ENCODE measurements at regions of chr17 and their contacts with region 1.

Region 1: GRCh38 chr17:39244600-39245570 is 19.1 kb upstream of the STAC2 start:
- DNase-seq: peak; percentile 92 to 93
- H3K4me3 ChIP-seq: no peak overlapping the region
- H3K27ac ChIP-seq: no peak overlapping the region
- H3K4me1 ChIP-seq: peaks cover 0 to 14% (median 4%) of the 10 kb centered on the region in 4 donors
- H3K27me3 ChIP-seq: peaks cover 0 to 36% (median under 1%) of the 10 kb centered on the region in 3 donors
- CTCF ChIP-seq: peak in 6 of 7 experiments; percentile 44 to 99 (median 90)
- EP300 ChIP-seq: no peak
- POLR2A ChIP-seq: no peak

Region 2: DNA sequence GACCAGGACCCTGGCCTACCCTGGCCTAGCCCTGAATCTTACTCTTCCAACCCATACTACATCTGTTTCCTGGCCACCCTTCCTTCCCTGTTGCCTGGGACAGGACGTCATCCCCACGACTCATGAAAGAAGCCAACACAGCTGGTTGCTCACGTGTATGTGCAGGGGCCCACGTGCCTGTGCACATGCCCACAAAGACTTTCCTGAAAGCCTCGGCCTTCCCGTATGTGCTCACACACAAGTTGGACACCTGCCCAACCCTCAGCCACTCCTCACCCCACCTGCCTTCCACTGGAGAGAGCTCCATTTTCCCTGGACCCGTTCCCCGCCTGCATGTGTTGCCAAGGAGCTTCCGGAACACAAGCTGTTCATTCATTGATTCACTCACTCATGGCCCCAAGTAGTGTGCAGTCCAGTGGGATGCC is 100.5 kb before region 1 on chr17:
- intact Hi-C with region 1: no loop called
- DNase-seq: peak; percentile 89 to 90
- H3K4me3 ChIP-seq: no peak overlapping the region
- H3K27ac ChIP-seq: peak overlapping the region; percentile 9 to 70 (median 55)
- H3K4me1 ChIP-seq: peaks cover 0 to 20% (median 18%) of the 10 kb centered on the region in 4 donors
- H3K27me3 ChIP-seq: peaks cover 0 to 5% (median 0%) of the 10 kb centered on the region in 3 donors
- CTCF ChIP-seq: no peak
- EP300 ChIP-seq: no peak
- POLR2A ChIP-seq: no peak

Region 3: DNA sequence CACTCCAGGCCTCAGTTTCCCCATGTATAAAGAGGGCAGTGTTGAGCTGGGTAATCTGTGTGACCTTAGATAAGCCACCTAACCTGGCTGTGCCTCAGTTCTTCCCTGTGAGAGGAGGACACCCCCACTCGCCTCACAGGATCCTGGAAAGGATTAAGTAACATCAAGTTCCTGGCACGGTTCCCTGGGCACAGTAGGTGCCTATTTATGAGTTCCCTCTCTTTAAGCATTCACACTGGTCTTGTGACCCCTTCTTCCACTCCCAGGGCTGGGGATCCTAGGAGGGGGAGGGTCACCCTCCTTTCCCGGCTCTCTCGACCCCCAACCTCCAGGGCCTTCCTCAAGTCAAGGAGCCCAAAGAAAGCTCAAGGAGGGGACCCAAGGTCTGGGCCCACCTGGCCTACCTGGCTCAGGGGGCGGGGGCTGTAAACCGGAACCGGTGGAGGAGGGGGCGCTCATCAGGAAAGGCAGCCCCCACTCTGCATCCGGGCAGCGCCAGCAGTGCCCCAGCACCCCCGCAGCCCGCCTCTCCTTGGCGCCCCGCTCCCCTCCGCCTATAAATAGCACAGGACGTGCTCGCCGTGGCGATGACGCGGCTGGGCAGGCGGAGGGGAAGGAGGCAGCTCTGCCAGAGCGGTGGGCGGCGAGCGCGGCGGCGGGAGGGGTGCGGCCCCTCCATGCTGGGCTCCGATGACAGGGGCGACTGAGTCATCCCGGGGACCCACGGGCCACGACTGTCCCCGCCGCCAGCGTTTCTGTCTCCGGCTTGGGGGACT is 35.4 kb before region 1 on chr17:
- intact Hi-C with region 1: loop called (anchors 5 kb)
- DNase-seq: peak; percentile 67 to 94
- H3K4me3 ChIP-seq: peak overlapping the region; percentile 24 to 47 (median 44)
- H3K27ac ChIP-seq: peak overlapping the region in 2 of 5 donors; percentile 16 to 61
- H3K4me1 ChIP-seq: peaks cover 15 to 28% (median 25%) of the 10 kb centered on the region in 4 donors
- H3K27me3 ChIP-seq: peaks cover 0 to 31% (median 10%) of the 10 kb centered on the region in 3 donors
- CTCF ChIP-seq: no peak
- EP300 ChIP-seq: no peak
- POLR2A ChIP-seq: no peak

Region 4: GRCh38 chr17:39391448-39391847 is 146.6 kb after region 1 on chr17:
- intact Hi-C with region 1: no loop called
- DNase-seq: no peak
- H3K4me3 ChIP-seq: no peak overlapping the region
- H3K27ac ChIP-seq: no peak overlapping the region
- H3K4me1 ChIP-seq: peaks cover 0 to 40% (median 9%) of the 10 kb centered on the region in 4 donors
- H3K27me3 ChIP-seq: no peaks in the 10 kb centered on the region
- CTCF ChIP-seq: no peak
- EP300 ChIP-seq: no peak
- POLR2A ChIP-seq: no peak

Region 5: GRCh38 chr17:39401412-39402243 is 156.7 kb after region 1 on chr17 and contains the start of gene FBXL20:
- intact Hi-C with region 1: no loop called
- DNase-seq: peak; percentile 96 to 98
- H3K4me3 ChIP-seq: peak within 1 kb of the TSS; percentile 90 to 100 (median 98)
- H3K27ac ChIP-seq: peak within 1 kb of the TSS; percentile 88 to 93 (median 92)
- H3K4me1 ChIP-seq: peaks cover 12 to 49% (median 37%) of the 10 kb centered on the region in 4 donors
- H3K27me3 ChIP-seq: no peaks in the 10 kb centered on the region
- CTCF ChIP-seq: no peak
- EP300 ChIP-seq: no peak
- POLR2A ChIP-seq: peak in 1 of 4 donors; percentile 40
- total RNA-seq, gene FBXL20: 6.7 to 18.4 (median 11.1) TPM

Region 6: GRCh38 chr17:39429600-39429999 is 184.7 kb after region 1 on chr17:
- intact Hi-C with region 1: no loop called
- DNase-seq: no peak
- H3K4me3 ChIP-seq: no peak overlapping the region
- H3K27ac ChIP-seq: no peak overlapping the region
- H3K4me1 ChIP-seq: no peaks in the 10 kb centered on the region
- H3K27me3 ChIP-seq: no peaks in the 10 kb centered on the region
- CTCF ChIP-seq: no peak
- EP300 ChIP-seq: no peak
- POLR2A ChIP-seq: no peak